ENCODE measurements at regions of chr1 and their contacts with region 1.

Region 1: DNA sequence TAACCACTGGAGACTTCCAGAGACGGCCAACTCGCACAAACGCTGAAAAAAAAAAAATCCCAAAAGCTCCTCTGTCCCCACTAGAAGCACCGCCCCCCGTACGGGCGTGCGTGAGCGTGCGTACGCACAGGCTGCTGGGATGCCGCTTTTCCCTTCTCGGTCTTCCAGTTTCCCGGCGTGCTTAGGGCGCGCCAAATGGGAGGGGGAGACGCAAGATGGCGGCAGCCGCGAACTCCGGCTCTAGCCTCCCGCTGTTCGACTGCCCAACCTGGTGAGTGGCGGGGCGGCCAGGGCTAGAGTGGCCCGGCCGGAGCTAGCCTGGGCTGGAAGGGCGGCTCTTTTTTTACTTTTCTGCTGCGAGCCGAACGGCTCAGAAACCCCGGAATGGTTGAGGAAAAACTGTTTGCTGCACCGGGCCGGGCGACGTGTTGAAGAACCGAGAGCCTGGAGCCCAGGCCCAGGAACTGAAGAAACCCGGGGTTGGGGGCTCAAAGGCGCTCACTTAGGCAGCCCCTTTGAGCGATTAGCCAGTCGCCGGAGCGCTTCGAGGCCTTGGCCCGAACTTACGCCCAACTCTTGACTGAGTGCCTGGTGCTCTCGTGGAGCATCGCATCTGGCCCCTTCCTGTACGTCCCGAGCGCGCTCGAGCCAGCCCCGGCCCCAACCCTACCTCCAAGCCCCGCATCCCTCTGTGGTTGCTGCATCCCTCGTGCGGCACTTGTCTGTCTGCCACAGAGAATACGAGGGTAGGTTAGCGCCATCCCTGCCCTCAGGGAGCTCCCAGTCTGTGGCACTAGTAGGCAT is at the start of gene PPP1R8:
- DNase-seq: peak; percentile 72
- ATAC-seq: peak; percentile 99
- H3K4me3 ChIP-seq: peak within 1 kb of the TSS; percentile 90
- H3K27ac ChIP-seq: peak within 1 kb of the TSS; percentile 87
- H3K4me1 ChIP-seq: no peaks in the 10 kb centered on the region
- H3K27me3 ChIP-seq: no peaks in the 10 kb centered on the region
- CTCF ChIP-seq: no peak
- EP300 ChIP-seq: 0 out of 4 replicates have a peak, but pooled peaks of 1 of the 2 experiments have one; percentile 8
- POLR2A ChIP-seq: peak; percentile 97
- RAD21 ChIP-seq: no peak
- polyA plus RNA-seq, gene PPP1R8: 14.5 to 15.3 TPM

Region 2: DNA sequence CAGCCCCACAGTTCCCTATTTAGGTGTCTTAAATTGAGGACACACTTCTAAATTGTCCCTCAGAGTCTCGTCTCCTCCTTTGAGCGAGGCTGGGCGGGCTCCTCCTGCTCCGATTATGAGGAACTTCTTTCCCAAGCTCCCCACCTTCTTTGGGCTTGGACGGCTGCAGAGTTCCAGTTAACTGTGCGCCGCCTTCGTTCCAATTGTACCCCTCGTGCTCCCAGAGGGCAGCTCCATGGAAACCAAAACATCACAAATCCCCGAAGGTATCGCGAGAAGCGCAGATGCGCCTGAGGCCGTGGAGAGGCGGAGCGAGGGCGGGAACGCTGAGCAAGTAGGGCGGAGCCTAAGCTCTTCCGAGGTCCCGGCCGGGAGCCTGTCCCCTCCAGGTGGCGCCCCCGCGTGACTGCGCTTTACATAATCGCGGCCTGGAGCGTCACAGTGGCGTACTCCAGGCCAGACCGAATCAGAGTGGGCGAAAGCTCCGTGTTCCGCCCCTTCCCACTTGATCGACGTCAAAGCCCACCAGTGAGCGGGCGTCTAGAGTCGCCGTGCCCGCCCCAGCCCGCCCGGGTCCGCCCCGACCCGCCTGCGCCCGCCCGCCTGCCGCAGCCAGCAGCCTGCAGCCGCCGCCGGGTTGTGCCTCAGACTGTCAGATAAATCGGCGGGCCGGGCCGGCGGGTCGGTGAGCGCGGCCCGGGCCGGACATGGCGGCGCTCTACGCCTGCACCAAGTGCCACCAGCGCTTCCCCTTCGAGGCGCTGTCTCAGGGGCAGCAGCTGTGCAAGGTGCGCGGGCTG is 105.2 kb before region 1 on chr1 and contains the start of gene FAM76A:
- CTCF ChIA-PET with region 1: interaction called, 3 read pairs
- POLR2A ChIA-PET with region 1: interaction called, 11 read pairs
- RAD21 ChIA-PET with region 1: interaction called, 5 read pairs
- SMC1A ChIA-PET with region 1: no interaction called
- in situ Hi-C with region 1: no loop called
- intact Hi-C with region 1: loop called (anchors 10 kb)
- DNase-seq: peak; percentile 97
- ATAC-seq: peak; percentile 98
- H3K4me3 ChIP-seq: peak within 1 kb of the TSS; percentile 77
- H3K27ac ChIP-seq: peak within 1 kb of the TSS; percentile 73
- H3K4me1 ChIP-seq: peaks cover 11% of the 10 kb centered on the region
- H3K27me3 ChIP-seq: no peaks in the 10 kb centered on the region
- CTCF ChIP-seq: peak; percentile 37 to 75 (median 39); a peak in 4 of 6 replicates
- EP300 ChIP-seq: no peak
- POLR2A ChIP-seq: peak; percentile 82
- RAD21 ChIP-seq: no peak; the same call in 1 of the 2 replicates
- polyA plus RNA-seq, gene FAM76A: 7.6 to 13.4 TPM

Region 3: GRCh38 chr1:27785781-27786455 is 44.9 kb before region 1 on chr1:
- CTCF ChIA-PET with region 1: no interaction called
- POLR2A ChIA-PET with region 1: interaction called, 13 read pairs
- RAD21 ChIA-PET with region 1: no interaction called
- SMC1A ChIA-PET with region 1: interaction called, 3 read pairs
- in situ Hi-C with region 1: no loop called
- intact Hi-C with region 1: no loop called
- DNase-seq: no peak
- ATAC-seq: peak; percentile 23; the same call in 2 of the 3 replicates
- H3K4me3 ChIP-seq: no peak overlapping the region
- H3K27ac ChIP-seq: no peak overlapping the region
- H3K4me1 ChIP-seq: no peaks in the 10 kb centered on the region
- H3K27me3 ChIP-seq: no peaks in the 10 kb centered on the region
- CTCF ChIP-seq: no peak
- EP300 ChIP-seq: no peak
- POLR2A ChIP-seq: no peak
- RAD21 ChIP-seq: no peak

Region 4: GRCh38 chr1:27872059-27872801 is 41.4 kb after region 1 on chr1 and contains the start of gene THEMIS2:
- CTCF ChIA-PET with region 1: no interaction called
- POLR2A ChIA-PET with region 1: no interaction called
- RAD21 ChIA-PET with region 1: no interaction called
- SMC1A ChIA-PET with region 1: no interaction called
- in situ Hi-C with region 1: no loop called
- intact Hi-C with region 1: no loop called
- DNase-seq: no peak
- ATAC-seq: peak; percentile 66
- H3K4me3 ChIP-seq: peak within 1 kb of the TSS; percentile 90
- H3K27ac ChIP-seq: peak within 1 kb of the TSS; percentile 93
- H3K4me1 ChIP-seq: peaks cover 44% of the 10 kb centered on the region
- H3K27me3 ChIP-seq: no peaks in the 10 kb centered on the region
- CTCF ChIP-seq: no peak
- EP300 ChIP-seq: no peak
- POLR2A ChIP-seq: peak; percentile 88
- RAD21 ChIP-seq: no peak
- polyA plus RNA-seq, gene THEMIS2: 9.1 to 12.9 TPM

Measured in GM12878 (cell line).